Activated CD4-positive, alpha-beta memory T cell treated with anti-CD3 and anti-CD28 coated beads, Interleukin-2, amount 10 ng/mL, durations not matched to agents 7 days and 5 days (primary cell): ENCODE measurements at regions of chr7 and their contacts with region 1.

Region 1: DNA sequence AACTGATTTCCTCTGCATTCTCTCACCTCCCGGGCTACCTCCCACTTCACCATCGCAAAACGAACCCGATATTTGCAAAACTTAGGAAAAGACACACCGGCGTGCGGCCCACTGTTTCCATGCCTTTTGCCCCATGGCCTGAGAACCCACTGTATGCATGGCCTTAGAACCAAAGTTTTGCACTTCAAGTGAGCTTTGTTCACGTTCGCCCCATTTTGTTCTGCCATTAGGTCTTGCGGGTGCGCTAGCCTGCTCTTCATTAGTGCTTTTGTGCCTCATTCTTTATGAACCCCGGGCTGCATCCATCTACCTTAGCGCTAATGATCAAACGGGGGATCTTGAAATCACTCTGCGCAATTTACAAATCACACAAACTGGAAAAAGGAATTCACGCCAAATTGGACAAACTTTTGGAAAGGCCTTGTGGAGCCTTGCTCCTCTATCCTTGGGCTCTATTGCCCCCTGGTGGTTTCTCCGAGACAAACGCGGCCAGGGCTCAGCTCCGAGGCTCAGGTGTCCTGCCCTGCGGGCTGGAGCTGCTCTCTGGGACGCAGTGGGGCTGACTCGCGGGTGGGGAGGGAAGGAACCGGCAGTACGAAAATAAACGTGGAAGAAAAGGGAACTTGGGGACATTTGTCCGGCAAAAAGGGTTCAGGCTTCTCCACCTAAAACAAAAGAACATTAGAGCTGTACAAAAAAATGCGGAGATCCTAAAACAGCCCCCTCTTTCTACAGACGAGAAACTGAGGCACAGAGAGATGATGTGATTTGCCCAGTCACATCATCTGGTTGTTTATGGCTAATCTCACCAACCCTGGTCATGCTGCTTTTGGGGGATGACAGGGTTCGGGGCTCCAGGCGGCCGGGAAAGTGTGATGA is 300.4 kb upstream of the NFE2L3 start:
- DNase-seq: peak; percentile 69
- H3K4me3 Mint-ChIP-seq: peak overlapping the region; percentile 41
- H3K27ac Mint-ChIP-seq: peak overlapping the region; percentile 62
- H3K4me1 Mint-ChIP-seq: peaks cover 22% of the 10 kb centered on the region
- H3K27me3 Mint-ChIP-seq: peaks cover 52% of the 10 kb centered on the region

Region 2: DNA sequence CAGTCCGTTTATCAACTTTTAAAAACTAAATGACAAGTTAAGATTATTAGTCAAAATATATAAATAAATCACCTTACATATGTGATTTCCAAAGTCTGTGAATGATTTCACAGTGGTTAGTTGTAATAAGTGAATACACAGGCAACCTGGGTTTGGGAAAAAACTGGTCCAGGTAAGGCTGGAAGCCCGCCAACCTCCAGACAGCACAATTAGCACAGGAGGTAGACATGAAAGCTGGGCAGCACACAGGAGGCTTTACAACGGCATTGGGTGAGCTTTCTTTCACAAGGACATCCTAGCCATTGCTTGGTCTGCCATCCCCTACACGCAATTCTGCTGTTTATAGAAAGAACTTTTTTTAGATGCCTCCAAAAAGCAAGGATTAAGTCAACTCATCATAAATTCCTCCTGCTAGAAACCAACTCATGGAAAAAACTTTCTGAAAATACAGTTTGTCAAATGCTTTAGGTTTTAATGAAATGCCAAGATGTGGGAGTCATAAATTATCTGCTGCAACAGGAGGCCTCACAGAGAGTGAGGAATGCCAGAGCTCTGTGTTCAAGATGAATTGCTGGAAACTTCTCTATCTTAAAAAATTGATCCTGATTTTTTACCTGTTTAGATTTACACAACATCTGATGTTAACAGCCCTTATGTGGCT is 46.4 kb before region 1 on chr7:
- CTCF ChIA-PET with region 1: no interaction called
- POLR2A ChIA-PET with region 1: no interaction called
- DNase-seq: no peak
- H3K4me3 Mint-ChIP-seq: no peak overlapping the region
- H3K27ac Mint-ChIP-seq: no peak overlapping the region
- H3K4me1 Mint-ChIP-seq: peaks cover 6% of the 10 kb centered on the region
- H3K27me3 Mint-ChIP-seq: peaks cover 5% of the 10 kb centered on the region

Region 3: GRCh38 chr7:25862260-25863037 is 10.9 kb after region 1 on chr7:
- CTCF ChIA-PET with region 1: interaction called, 23 read pairs
- POLR2A ChIA-PET with region 1: interaction called, 3 read pairs
- DNase-seq: peak; percentile 99
- H3K4me3 Mint-ChIP-seq: peak overlapping the region; percentile 67
- H3K27ac Mint-ChIP-seq: peak overlapping the region; percentile 62
- H3K4me1 Mint-ChIP-seq: peaks cover 45% of the 10 kb centered on the region
- H3K27me3 Mint-ChIP-seq: peaks cover 71% of the 10 kb centered on the region

Region 4: DNA sequence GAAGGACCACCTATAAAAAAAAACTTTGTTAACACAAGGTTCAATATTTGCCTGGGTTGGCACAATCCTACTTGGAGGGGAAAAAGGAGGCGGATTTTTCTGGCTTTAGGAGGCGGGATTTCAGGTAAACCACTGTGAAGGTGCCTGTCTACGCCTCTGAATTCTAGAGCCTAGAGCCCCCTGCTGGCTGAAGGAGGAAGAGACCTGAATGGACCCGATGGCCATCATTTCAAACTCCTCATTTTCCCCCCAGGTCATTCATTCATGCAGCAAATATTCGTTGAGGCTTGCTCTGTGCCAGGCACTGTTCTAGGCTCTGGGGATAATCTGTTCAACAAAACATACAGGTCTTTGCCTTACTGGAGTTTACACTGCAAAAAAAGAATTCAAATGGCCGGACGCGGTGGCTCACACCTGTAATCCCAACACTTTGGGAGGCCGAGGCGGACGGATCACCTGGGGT is 210.1 kb after region 1 on chr7:
- CTCF ChIA-PET with region 1: no interaction called
- POLR2A ChIA-PET with region 1: no interaction called
- DNase-seq: peak; percentile 72
- H3K4me3 Mint-ChIP-seq: no peak overlapping the region
- H3K27ac Mint-ChIP-seq: no peak overlapping the region
- H3K4me1 Mint-ChIP-seq: peaks cover 13% of the 10 kb centered on the region
- H3K27me3 Mint-ChIP-seq: peaks cover 26% of the 10 kb centered on the region